K562 (cell line): ENCODE measurements at regions of chr6 and their contacts with region 1.

Region 1: DNA sequence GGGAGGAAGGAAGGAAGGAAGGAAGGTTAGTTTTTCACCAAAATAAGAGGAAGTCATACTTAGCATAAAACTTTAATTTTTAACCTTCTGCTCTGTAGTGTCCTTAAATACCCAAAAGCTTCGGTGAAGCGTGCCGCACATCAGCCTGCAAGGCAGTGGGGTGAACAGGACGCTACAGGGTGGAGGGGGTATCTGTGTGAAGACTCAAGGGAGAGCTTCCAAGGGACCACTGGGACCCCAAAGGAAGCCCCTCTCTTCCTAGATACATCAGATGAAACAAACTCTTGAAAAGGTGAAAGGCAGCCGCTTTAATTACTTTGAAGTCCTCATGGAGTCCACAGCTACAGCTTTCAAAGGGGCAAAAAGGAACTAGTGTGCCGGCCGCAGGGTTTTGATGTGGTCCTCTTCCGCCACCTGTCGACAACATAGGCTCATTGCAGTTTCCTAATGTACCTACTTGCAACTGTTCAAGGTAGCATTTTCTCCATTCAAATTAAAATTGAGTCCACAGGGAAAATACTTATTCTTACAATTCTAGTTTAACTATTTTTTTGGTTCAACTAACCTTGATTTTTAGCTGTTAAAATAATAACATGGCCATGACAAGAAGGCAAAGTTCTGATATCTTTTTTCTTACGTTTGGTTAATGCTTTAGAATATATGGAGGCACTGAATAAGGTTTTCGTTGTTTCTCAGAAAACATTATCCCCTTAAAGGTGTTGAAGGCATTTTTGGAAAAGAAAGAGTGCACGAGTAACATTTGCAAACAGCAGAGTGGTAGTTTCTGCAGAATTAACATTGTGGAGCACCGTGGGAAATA is 135.0 kb upstream of the RIPOR2 start:
- DNase-seq: peak; percentile 71 to 81 (median 72)
- ATAC-seq: peak; percentile 94
- H3K4me3 ChIP-seq: no peak overlapping the region
- H3K27ac ChIP-seq: no peak overlapping the region
- H3K4me1 ChIP-seq: no peaks in the 10 kb centered on the region
- H3K27me3 ChIP-seq: peaks cover 2 to 12% of the 10 kb centered on the region in 2 experiments; a peak in 3 of 5 replicates
- CTCF ChIP-seq: peak; percentile 77 to 96 (median 87)
- EP300 ChIP-seq: no peak
- POLR2A ChIP-seq: no peak
- RAD21 ChIP-seq: peak; percentile 96 to 97

Region 2: DNA sequence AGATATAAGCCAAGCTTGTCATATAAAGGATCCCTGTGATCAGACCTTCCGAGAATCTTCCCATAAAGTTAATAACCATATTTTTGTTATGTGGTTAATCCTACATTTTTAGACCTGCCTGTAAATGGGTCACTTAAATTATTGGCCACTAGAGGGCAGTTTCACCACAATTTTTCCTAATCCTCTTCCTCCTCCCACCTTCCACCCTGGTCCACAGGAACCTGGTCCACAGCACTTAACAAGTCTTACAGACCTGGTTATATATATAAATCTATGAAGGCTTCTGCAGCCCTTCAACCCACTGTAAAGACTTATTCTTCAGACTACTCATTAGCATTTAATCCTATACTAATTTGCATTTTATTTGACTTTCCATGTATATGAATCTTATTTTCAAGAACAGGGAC is 639.7 kb before region 1 on chr6:
- CTCF ChIA-PET with region 1: no interaction called
- POLR2A ChIA-PET with region 1: interaction called, 4 read pairs
- in situ Hi-C with region 1: no loop called
- intact Hi-C with region 1: loop called (anchors 2 kb)
- DNase-seq: peak; percentile 67 to 71 (median 68)
- ATAC-seq: peak; percentile 90
- H3K4me3 ChIP-seq: no peak overlapping the region
- H3K27ac ChIP-seq: no peak overlapping the region
- H3K4me1 ChIP-seq: peaks cover 0 to 8% of the 10 kb centered on the region in 2 experiments; a peak in 3 of 5 replicates
- H3K27me3 ChIP-seq: no peaks in the 10 kb centered on the region
- CTCF ChIP-seq: peak; percentile 65 to 84 (median 77)
- EP300 ChIP-seq: no peak
- POLR2A ChIP-seq: no peak
- RAD21 ChIP-seq: peak; percentile 36 to 74; a peak in 3 of 4 replicates

Region 3: DNA sequence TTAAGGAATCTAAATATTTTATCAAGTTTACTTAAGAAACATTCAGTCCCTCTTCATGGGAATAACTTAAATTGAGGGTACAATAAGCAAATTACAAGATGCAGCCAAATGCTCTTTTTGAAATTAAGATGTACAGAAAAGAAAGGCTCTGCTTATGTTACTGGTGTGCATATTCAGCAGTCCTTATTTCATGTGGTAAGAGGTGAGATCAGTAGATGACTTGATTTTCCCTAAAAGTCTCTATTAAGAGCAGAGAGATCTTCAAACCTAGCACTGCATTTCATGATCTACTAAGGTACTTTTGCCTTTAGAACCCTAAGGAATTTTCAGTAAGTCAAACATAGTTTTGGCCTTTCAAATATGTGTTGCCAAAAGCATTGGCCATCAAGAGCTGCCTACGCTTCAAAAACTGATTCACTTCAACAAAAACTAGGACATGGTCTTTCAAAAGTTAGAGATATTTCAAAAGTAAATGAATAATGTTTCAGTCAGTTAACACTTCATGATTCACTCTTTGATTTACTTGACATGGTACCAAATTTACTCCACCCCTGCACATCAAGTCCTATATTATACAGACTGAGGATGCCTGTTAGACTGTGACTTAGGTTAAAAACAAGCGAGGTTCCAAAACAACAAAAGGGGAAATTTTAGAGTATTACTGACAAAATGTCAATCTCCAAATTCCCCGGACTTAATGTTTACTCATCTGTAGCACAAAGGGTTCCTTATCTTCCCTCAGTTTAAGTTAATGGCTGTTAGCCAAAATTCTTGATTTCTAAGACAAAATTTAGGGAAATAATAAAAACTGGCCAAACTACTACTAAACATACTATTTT is 371.0 kb before region 1 on chr6:
- CTCF ChIA-PET with region 1: no interaction called
- POLR2A ChIA-PET with region 1: no interaction called
- in situ Hi-C with region 1: no loop called
- intact Hi-C with region 1: loop called (anchors 5 kb)
- DNase-seq: no peak
- ATAC-seq: no peak
- H3K4me3 ChIP-seq: no peak overlapping the region
- H3K27ac ChIP-seq: no peak overlapping the region
- H3K4me1 ChIP-seq: no peaks in the 10 kb centered on the region
- H3K27me3 ChIP-seq: no peaks in the 10 kb centered on the region
- CTCF ChIP-seq: no peak
- EP300 ChIP-seq: no peak
- POLR2A ChIP-seq: no peak
- RAD21 ChIP-seq: no peak

Region 4: DNA sequence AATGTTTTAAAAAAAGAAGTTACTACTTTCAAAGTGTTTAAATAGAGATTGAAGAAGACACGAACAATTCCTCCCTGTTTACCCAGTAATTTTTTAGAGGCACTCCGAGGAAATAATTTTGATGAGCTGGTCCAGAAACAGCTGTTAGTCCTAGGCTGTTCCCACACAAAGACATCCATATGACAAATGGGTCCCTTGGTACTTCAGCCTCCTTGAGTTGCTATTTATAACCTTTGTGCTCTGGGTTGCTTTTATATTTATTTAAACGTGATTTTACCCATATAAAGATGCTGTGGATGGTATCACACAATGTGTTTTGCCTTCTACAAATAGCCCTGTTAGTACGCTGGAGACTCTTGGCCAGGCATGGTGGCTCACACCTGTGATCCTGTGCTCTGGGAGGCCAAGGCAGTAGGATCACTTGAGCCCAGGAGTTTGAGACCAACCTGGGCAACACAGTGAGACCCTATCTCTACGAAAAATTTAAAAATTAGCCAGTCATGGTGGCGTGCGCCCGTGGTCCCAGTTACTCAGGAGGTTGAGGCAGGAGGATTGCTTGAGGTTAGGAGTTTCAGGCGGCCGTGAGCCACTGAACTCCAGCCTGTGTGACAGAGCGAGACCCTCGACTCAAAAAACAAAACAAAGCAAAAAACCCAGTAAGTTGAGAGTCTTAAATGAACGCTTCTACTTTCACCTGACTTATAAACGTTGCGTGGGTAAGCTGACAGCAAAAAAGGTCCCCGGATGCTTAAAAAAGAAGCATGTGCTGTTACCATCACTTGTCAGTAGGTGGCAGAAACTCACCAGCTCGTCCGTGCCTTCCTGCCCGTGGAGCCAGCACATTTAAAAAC is 215.1 kb before region 1 on chr6:
- CTCF ChIA-PET with region 1: interaction called, 23 read pairs
- POLR2A ChIA-PET with region 1: no interaction called
- in situ Hi-C with region 1: no loop called
- intact Hi-C with region 1: loop called (anchors 1 kb)
- DNase-seq: peak; percentile 79 to 83 (median 80)
- ATAC-seq: peak; percentile 94
- H3K4me3 ChIP-seq: no peak overlapping the region
- H3K27ac ChIP-seq: no peak overlapping the region
- H3K4me1 ChIP-seq: no peaks in the 10 kb centered on the region
- H3K27me3 ChIP-seq: peaks cover 13 to 24% of the 10 kb centered on the region in 2 experiments
- CTCF ChIP-seq: peak; percentile 84 to 93 (median 86)
- EP300 ChIP-seq: no peak
- POLR2A ChIP-seq: no peak
- RAD21 ChIP-seq: peak; percentile 89

Region 5: DNA sequence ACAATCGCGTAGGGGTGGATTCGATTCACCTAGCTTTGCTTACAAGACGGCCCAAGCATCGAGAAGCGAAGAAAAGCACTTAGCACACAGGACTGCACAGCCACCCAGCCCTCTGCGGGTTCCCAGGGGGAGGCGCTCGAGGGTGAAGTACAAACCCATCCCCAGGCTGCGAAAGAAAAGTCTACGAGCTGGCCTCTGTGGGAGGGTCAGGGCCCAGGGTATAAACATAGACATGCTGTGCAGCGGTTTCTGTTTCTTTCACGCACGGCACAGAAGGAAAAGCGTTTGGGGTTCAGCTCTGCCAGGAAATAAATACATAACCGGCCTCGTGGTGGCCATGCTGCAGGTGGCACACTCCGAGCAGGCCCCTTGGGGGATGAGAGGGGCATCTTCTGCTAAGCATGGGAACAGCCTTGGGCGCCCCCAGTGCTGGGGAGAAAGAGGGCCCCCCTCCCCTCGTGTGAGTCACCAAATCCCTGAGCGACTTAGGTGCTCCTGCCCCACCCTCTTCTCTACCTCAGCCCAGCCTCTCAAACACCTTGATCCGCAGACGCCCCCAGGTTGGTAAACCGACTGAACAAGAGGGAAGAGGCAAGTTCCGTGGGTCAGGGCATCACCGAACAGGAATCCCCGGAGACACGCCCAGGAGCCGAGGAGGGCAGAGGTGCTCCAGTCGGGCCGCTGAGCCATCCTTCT is 43.4 kb before region 1 on chr6:
- CTCF ChIA-PET with region 1: interaction called, 11 read pairs
- POLR2A ChIA-PET with region 1: interaction called, 3 read pairs
- in situ Hi-C with region 1: no loop called
- intact Hi-C with region 1: loop called (anchors 5 kb)
- DNase-seq: peak in 2 of 4 experiments; percentile 28 to 38
- ATAC-seq: peak; percentile 85
- H3K4me3 ChIP-seq: no peak overlapping the region
- H3K27ac ChIP-seq: no peak overlapping the region
- H3K4me1 ChIP-seq: peaks cover 0 to 4% of the 10 kb centered on the region in 2 experiments; a peak in 2 of 5 replicates
- H3K27me3 ChIP-seq: peaks cover 9 to 49% of the 10 kb centered on the region in 2 experiments; a peak in 4 of 5 replicates
- CTCF ChIP-seq: peak; percentile 44 to 53 (median 45); a peak in 5 of 6 replicates
- EP300 ChIP-seq: no peak
- POLR2A ChIP-seq: no peak
- RAD21 ChIP-seq: peak; percentile 60 to 63